Activated naive CD4-positive, alpha-beta T cell treated with anti-CD3 and anti-CD28 coated beads for 36 hours (primary cell): ENCODE measurements at regions of chr15 and their contacts with region 1.

Region 1: DNA sequence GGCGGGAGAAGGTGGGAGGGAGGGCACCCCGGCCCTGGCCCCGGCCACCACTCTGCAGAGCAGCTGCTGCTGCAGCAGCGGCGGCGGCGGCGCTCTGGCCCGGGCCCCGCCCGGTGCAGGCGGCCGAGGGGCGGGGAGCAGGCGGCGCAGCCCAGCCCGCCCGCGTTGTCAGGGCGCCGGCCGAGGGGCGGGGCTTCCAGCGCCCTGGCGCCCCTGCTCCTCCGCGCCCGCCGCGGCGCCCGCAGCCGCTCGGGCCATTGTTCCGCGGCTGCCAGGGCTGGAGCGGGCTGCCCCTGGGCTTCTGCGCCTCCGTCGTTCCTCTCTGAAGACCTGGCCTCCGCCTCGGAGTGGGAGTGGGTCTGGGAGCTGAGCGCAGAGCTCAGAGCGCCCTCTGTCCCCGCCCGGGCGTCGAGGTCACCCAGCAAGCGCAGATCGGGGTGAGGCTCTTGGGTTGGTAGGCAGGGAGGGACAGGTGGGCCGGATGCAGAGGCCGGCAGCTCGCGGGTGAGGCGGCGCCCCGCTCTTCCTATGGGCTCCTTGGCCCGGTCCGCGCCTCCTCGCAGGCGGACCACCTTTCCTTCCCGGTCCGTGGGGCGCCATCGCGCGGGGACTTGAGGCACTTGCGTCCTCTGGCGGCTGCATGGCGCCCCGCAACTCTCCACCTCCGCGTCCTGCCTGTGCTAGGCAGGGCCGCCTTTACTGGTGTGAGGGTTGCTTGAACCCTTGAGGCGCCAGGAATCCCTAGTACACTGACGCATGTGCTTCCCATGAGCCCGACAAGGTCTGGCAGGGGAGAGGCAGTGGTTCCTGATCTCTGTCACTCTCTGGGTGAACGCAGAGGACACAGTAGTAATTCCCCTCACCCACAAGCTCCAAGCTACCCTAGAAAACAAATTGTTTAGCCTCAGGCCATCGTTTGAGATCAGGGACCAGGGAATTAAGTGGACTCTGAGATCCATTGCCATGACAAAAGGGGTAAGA is at the start of gene LPCAT4:
- DNase-seq: peak; percentile 91
- H3K4me3 Mint-ChIP-seq: peak within 1 kb of the TSS; percentile 97
- H3K27ac Mint-ChIP-seq: peak within 1 kb of the TSS; percentile 96
- H3K4me1 Mint-ChIP-seq: peaks cover 36% of the 10 kb centered on the region
- H3K27me3 Mint-ChIP-seq: no peaks in the 10 kb centered on the region
- total RNA-seq, gene LPCAT4: 63.5 to 66.8 TPM

Region 2: DNA sequence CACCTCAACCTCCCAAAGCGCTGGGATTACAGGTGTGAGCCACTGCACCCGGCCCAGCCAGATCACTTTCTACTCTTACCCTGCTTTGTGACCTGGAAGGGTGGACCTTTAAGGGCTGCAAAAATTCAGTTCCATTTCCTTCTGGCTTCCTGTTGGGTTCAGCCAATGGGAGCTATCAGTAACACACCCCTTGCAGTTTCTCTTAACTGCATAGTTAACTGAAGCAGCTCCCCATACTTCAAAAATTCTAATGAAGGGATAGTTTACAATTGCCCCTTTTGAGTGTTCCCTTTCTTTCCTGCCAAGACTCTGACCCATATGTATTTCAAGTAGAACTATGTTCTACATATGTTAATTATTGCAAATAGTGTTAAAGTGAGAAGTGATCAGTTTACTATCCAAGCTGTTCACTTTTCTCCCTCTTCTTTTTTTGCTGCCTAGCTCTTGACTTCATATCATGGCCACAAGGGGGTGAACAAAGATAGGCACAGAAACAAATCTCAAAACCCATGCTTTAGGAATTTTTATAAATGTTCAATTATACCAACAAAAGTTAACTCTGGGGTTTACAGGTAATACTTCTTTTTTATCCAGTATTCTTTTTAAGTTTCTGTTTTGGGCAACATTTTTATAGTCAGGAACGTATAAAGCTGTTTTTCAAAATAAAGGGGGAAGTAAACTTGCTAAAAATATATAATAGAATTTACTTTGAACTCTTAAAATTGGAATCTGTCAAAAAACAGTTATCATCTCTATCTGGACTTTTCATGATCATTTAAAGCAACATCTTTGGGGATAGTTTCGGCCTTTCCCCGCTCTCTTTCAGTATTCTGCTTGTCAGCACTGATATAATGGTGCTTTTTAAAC is 257.4 kb before region 1 on chr15:
- CTCF ChIA-PET with region 1: interaction called, 6 read pairs
- intact Hi-C with region 1: loop called (anchors 1 kb)
- DNase-seq: peak; percentile 12
- H3K4me3 Mint-ChIP-seq: no peak overlapping the region
- H3K27ac Mint-ChIP-seq: no peak overlapping the region
- H3K4me1 Mint-ChIP-seq: no peaks in the 10 kb centered on the region
- H3K27me3 Mint-ChIP-seq: no peaks in the 10 kb centered on the region

Region 3: GRCh38 chr15:34241372-34242330 is 125.7 kb before region 1 on chr15:
- CTCF ChIA-PET with region 1: interaction called, 16 read pairs
- intact Hi-C with region 1: loop called (anchors 1 kb)
- DNase-seq: peak; percentile 45
- H3K4me3 Mint-ChIP-seq: no peak overlapping the region
- H3K27ac Mint-ChIP-seq: peak overlapping the region; percentile 54
- H3K4me1 Mint-ChIP-seq: peaks cover 38% of the 10 kb centered on the region
- H3K27me3 Mint-ChIP-seq: no peaks in the 10 kb centered on the region

Region 4: DNA sequence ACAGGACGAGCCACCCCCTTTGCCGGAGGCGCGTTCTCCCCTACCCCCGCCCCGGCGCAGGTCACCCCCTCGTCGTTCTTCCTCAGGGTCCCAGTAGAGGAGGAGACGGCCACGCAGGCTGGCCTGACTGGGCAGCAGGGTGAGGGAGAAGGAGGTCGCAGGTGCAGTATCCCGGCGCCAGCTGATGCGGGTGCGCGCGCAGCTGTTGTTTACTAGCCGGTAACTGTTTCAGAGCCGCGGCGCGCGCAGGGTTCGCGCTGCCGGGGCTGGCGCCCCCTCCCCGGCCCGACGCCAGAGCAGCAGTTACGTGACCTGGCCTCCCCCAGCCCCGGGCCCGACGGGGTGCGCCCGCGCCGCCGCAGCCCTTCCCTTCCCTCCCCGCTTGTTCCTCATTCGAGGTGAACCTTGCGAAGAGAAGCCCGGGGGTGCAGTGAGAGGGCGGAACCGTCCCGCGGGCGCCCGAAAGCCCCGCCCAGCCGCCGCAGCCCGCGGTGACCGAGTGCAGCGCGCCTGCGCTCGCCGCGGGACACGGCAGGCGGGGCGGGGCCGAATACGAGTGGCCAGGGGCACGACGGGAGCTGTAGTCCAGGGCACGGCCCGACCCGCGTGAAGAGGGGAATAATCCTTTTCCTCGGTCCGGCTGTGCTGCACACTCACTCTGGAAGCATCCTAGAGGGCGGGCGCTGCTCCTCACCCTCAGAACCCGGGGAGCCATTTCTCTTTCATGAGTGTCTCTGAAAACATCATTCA is 29.7 kb before region 1 on chr15 and contains the start of gene SLC12A6:
- CTCF ChIA-PET with region 1: interaction called, 21 read pairs
- intact Hi-C with region 1: loop called (anchors 1 kb)
- DNase-seq: peak; percentile 91
- H3K4me3 Mint-ChIP-seq: peak within 1 kb of the TSS; percentile 95
- H3K27ac Mint-ChIP-seq: peak within 1 kb of the TSS; percentile 97
- H3K4me1 Mint-ChIP-seq: peaks cover 53% of the 10 kb centered on the region
- H3K27me3 Mint-ChIP-seq: no peaks in the 10 kb centered on the region
- total RNA-seq, gene SLC12A6: 24.6 to 28.7 TPM

Region 5: DNA sequence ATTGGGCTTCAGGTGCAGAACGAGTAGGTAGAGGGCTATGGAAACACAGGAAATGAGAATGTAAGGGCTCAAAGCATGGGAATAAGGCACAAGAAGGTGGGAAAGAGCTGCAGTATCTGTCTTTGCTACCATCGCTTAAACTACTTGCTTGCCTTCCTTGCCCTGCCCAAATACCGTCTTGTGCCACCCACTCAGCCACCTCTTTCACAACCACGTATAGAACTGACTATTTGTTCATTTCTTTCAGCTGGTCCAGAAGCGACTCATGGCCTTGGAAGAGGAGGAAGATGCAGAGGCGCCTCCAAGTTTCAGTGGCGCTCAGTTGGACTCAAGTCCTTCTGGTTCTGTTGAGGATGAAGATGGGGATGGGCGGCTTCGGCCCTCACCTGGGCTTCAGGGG is 12.2 kb before region 1 on chr15:
- CTCF ChIA-PET with region 1: interaction called, 10 read pairs
- intact Hi-C with region 1: no loop called
- DNase-seq: no peak
- H3K4me3 Mint-ChIP-seq: no peak overlapping the region
- H3K27ac Mint-ChIP-seq: no peak overlapping the region
- H3K4me1 Mint-ChIP-seq: no peaks in the 10 kb centered on the region
- H3K27me3 Mint-ChIP-seq: no peaks in the 10 kb centered on the region